OCI-LY7 (cell line): ENCODE measurements at regions of chr18 and their contacts with region 1.

Region 1: GRCh38 chr18:1848716-1849115 is 722.6 kb downstream of the METTL4 start:
- DNase-seq: no peak
- H3K4me3 ChIP-seq: no peak overlapping the region
- H3K27ac ChIP-seq: no peak overlapping the region
- H3K4me1 ChIP-seq: no peaks in the 10 kb centered on the region
- CTCF ChIP-seq: no peak

Region 2: DNA sequence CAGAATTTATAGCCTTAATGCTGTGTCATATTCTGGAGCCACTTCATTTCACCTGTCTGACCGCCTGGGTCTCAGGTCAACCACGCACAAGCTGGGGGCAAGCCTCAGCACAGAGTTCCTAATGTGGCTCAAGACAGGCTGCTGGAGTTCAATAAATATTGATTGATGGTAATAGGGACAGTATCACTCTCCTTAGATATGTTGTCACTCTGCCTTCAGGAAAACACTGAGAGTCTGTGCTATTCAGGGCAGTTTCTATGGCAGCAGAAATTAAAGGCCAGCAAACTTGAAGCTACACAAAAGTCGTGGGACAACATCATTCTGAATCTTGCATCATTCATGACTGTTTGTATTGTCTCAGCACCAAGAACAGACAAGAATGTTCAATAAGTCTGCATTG is 26.5 kb after region 1 on chr18:
- CTCF ChIA-PET with region 1: no interaction called
- POLR2A ChIA-PET with region 1: interaction called, 3 read pairs
- intact Hi-C with region 1: loop called (anchors 1 kb)
- DNase-seq: no peak
- H3K4me3 ChIP-seq: no peak overlapping the region
- H3K27ac ChIP-seq: no peak overlapping the region
- H3K4me1 ChIP-seq: no peaks in the 10 kb centered on the region
- CTCF ChIP-seq: no peak